ENCODE measurements at regions of chr20 and their contacts with region 1.

Region 1: DNA sequence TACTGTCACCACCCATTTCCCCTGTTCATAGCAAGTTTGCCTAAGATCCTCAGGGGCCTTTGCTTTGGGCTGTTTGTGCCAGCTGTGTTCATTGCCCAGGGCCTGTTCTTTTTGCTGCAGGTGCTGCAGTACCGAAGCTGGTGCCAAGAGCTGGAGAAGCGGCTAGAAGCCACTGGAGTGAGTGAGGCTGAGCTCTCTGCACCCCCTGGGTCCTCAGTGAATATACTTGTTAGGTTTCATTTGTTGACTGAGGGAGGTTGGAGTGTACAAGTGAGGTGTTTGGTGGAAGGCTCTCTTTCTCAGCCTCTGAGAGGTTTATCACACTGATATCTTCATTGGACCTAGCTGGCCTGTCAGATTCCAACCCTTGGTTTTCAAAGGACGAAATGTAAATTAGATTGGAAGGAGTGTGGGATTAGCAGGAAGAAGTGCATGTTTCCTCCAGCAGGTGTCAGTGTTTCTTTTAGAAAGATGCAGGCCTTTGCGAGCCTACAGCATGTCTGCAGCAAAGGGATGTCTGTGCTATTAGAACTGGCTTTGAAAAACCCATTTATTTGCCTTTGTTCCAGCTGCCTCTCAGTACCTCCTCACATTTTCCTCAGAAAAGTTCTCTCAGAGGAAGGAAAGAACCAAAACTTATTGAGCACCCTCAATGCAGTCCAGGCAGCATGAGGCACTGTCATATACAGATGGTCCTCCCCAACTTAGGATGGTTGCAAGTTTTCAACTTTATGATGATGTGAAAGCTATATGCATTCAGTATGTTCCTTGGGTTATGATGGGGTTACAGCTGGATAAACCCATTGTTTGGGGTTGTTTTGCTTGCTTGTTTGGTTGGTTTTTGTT is 8.3 kb downstream of the CEP250 start:
- DNase-seq: peak; percentile 13 to 78 (median 60)
- ATAC-seq: peak; percentile 94
- H3K4me3 ChIP-seq: no peak overlapping the region
- H3K4me3 Mint-ChIP-seq: no peak overlapping the region
- H3K27ac ChIP-seq: no peak overlapping the region
- H3K27ac Mint-ChIP-seq: no peak overlapping the region
- H3K4me1 ChIP-seq: peaks cover 3% of the 10 kb centered on the region
- H3K4me1 Mint-ChIP-seq: peaks cover 9% of the 10 kb centered on the region
- H3K27me3 ChIP-seq: no peaks in the 10 kb centered on the region
- H3K27me3 Mint-ChIP-seq: no peaks in the 10 kb centered on the region
- CTCF ChIP-seq: peak; percentile 86

Region 2: DNA sequence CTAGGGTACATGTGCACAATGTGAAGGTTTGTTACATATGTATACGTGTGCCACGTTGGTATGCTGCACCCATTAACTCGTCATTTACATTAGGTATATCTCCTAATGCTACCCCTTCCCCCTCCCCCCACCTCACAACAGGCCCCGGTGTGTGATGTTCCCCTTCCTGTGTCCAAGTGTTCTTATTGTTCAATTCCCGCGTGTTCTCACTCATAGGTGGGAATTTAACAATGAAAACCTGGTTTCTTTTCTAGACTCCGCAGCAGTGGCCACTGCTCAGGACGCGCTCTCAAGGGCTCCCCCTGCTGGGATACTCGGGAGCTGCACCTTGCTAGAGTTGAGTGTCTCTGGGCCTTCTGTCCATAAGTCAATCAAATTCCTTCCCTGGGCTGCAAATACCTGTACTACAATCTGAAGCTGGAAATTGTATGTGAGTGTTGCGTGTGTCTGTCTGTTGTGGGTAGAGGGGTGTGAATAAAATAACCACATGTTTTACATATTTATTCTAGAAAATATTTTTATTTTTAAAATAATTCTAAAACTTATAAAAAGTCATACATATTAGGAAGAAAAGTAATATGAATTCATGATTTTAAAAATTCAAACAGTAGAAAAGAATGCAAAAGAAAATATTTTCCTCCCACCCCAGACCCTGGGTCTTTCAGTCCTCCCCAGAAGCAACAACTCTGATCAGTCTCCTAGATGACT is 16.4 kb before region 1 on chr20:
- CTCF ChIA-PET with region 1: interaction called, 48 read pairs
- POLR2A ChIA-PET with region 1: no interaction called
- intact Hi-C with region 1: no loop called
- DNase-seq: peak; percentile 82 to 95 (median 86)
- ATAC-seq: peak; percentile 100
- H3K4me3 ChIP-seq: peak overlapping the region in 1 of 2 experiments; percentile 31
- H3K4me3 Mint-ChIP-seq: peak overlapping the region; percentile 89
- H3K27ac ChIP-seq: no peak overlapping the region
- H3K27ac Mint-ChIP-seq: no peak overlapping the region
- H3K4me1 ChIP-seq: no peaks in the 10 kb centered on the region
- H3K4me1 Mint-ChIP-seq: peaks cover 3% of the 10 kb centered on the region
- H3K27me3 ChIP-seq: no peaks in the 10 kb centered on the region
- H3K27me3 Mint-ChIP-seq: peaks cover 5% of the 10 kb centered on the region
- CTCF ChIP-seq: peak; percentile 87

Region 3: GRCh38 chr20:35490736-35491181 is 27.1 kb after region 1 on chr20:
- CTCF ChIA-PET with region 1: interaction called, 18 read pairs
- POLR2A ChIA-PET with region 1: interaction called, 7 read pairs
- intact Hi-C with region 1: loop called in 1 of 2 experiments (anchors 1 kb)
- DNase-seq: peak; percentile 19 to 87 (median 75)
- ATAC-seq: peak; percentile 98
- H3K4me3 ChIP-seq: peak overlapping the region; percentile 86 to 94
- H3K4me3 Mint-ChIP-seq: peak overlapping the region; percentile 98
- H3K27ac ChIP-seq: peak overlapping the region; percentile 91 to 95
- H3K27ac Mint-ChIP-seq: peak overlapping the region; percentile 99
- H3K4me1 ChIP-seq: peaks cover 46% of the 10 kb centered on the region
- H3K4me1 Mint-ChIP-seq: peaks cover 61% of the 10 kb centered on the region
- H3K27me3 ChIP-seq: no peaks in the 10 kb centered on the region
- H3K27me3 Mint-ChIP-seq: no peaks in the 10 kb centered on the region
- CTCF ChIP-seq: no peak

Region 4: GRCh38 chr20:35523298-35523888 is 59.7 kb after region 1 on chr20:
- CTCF ChIA-PET with region 1: interaction called, 9 read pairs
- POLR2A ChIA-PET with region 1: no interaction called
- intact Hi-C with region 1: loop called (anchors 1 to 5 kb)
- DNase-seq: peak in 4 of 9 experiments; percentile 17 to 36 (median 24)
- ATAC-seq: no peak
- H3K4me3 ChIP-seq: no peak overlapping the region
- H3K4me3 Mint-ChIP-seq: no peak overlapping the region
- H3K27ac ChIP-seq: no peak overlapping the region
- H3K27ac Mint-ChIP-seq: no peak overlapping the region
- H3K4me1 ChIP-seq: no peaks in the 10 kb centered on the region
- H3K4me1 Mint-ChIP-seq: no peaks in the 10 kb centered on the region
- H3K27me3 ChIP-seq: no peaks in the 10 kb centered on the region
- H3K27me3 Mint-ChIP-seq: no peaks in the 10 kb centered on the region
- CTCF ChIP-seq: no peak

Region 5: DNA sequence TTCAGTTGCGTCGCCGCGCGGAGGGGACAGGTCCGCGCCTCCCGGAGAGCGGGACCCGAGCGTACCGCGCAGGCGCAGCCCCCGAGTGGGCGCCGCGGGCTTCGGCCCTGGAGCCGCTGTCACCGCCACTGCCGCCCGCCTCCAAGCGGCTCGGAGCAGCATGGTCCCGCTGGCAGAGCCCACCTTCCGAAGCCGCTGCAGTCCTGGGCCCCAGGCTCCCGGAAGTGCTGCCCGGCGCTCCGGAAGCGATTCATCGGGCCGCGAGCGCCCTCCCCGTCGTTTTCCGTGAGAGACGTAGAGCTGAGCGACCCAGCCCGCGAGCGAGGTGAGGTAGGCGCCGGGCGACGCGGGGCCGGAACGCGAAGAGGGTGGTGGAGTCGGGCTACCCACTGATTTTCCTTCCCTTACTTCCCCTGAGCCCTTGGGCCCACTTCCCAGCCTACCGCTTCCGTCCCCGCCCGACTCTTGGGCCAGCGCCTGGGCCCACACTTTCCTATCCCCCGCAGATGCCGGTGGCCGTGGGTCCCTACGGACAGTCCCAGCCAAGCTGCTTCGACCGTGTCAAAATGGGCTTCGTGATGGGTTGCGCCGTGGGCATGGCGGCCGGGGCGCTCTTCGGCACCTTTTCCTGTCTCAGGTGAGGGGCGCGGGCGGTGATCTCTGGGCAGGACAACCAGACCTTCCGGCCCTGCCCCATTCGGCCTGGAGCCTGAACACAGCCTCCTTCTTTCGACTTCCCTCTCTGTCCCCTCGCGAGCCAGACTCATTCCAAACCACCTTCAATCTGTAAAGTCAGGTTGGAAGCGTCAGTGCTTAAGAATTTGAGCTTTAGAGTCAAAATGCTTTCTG is 235.7 kb after region 1 on chr20 and contains the starts of genes NFS1 and ROMO1:
- CTCF ChIA-PET with region 1: interaction called, 3 read pairs
- POLR2A ChIA-PET with region 1: no interaction called
- intact Hi-C with region 1: loop called (anchors 1 to 10 kb)
- DNase-seq: peak; percentile 68 to 93 (median 87)
- ATAC-seq: peak; percentile 88
- H3K4me3 ChIP-seq: peak within 1 kb of the TSS; percentile 94 to 98
- H3K4me3 Mint-ChIP-seq: peak within 1 kb of the TSS; percentile 92
- H3K27ac ChIP-seq: peak within 1 kb of the TSS; percentile 85 to 98
- H3K27ac Mint-ChIP-seq: peak within 1 kb of the TSS; percentile 95
- H3K4me1 ChIP-seq: peaks cover 18% of the 10 kb centered on the region
- H3K4me1 Mint-ChIP-seq: peaks cover 42% of the 10 kb centered on the region
- H3K27me3 ChIP-seq: no peaks in the 10 kb centered on the region
- H3K27me3 Mint-ChIP-seq: no peaks in the 10 kb centered on the region
- CTCF ChIP-seq: peak; percentile 21
- total RNA-seq, gene NFS1: 10.7 to 13.1 TPM
- total RNA-seq, gene ROMO1: 39.2 to 43.8 TPM

Measured in CD8-positive, alpha-beta T cell (primary cell).